Aorta (tissue), 5 donors: ENCODE measurements at regions of chr3 and their contacts with region 1.

Region 1: DNA sequence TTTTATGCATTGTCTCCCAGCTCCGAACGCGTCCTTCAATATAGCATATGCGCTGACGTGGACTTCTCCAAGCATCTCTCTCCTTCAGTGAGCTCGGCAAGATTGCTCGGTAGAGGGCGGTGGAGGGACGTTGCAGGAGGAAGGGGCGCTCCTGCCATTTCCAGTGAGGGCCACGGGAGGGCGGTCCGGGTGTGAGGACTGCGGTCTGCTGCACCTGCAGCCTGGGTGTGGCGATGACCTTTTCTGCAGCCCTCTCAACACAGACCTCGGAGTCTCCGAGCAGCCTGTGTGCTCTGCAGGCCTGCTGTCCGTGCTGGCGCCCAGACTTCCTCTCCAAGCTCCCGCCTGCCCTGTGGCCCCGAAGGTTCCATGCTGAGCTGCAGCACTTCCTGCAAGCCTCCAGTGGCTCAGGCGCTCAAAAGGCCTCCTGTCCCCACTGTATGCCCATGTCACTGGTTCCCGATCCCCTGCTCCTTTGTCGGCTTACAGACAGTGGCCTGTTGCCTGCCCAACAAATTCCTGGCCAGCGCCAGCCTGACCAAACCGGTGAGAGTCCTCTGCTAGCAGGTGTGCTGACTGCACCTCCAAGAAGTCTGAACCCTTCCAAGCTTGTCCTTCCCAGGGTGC is 8.9 kb upstream of the RTP3 start:
- DNase-seq: peak; percentile 93 to 95
- ATAC-seq: peak; percentile 94
- H3K4me3 ChIP-seq: no peak overlapping the region
- H3K27ac ChIP-seq: no peak overlapping the region
- H3K4me1 ChIP-seq: no peaks in the 10 kb centered on the region
- H3K27me3 ChIP-seq: no peaks in the 10 kb centered on the region

Region 2: GRCh38 chr3:46462111-46462510 is 26.7 kb before region 1 on chr3:
- intact Hi-C with region 1: no loop called
- DNase-seq: no peak
- ATAC-seq: no peak
- H3K4me3 ChIP-seq: no peak overlapping the region
- H3K27ac ChIP-seq: no peak overlapping the region
- H3K4me1 ChIP-seq: no peaks in the 10 kb centered on the region
- H3K27me3 ChIP-seq: peaks cover 0 to 2% of the 10 kb centered on the region in 2 donors

Region 3: DNA sequence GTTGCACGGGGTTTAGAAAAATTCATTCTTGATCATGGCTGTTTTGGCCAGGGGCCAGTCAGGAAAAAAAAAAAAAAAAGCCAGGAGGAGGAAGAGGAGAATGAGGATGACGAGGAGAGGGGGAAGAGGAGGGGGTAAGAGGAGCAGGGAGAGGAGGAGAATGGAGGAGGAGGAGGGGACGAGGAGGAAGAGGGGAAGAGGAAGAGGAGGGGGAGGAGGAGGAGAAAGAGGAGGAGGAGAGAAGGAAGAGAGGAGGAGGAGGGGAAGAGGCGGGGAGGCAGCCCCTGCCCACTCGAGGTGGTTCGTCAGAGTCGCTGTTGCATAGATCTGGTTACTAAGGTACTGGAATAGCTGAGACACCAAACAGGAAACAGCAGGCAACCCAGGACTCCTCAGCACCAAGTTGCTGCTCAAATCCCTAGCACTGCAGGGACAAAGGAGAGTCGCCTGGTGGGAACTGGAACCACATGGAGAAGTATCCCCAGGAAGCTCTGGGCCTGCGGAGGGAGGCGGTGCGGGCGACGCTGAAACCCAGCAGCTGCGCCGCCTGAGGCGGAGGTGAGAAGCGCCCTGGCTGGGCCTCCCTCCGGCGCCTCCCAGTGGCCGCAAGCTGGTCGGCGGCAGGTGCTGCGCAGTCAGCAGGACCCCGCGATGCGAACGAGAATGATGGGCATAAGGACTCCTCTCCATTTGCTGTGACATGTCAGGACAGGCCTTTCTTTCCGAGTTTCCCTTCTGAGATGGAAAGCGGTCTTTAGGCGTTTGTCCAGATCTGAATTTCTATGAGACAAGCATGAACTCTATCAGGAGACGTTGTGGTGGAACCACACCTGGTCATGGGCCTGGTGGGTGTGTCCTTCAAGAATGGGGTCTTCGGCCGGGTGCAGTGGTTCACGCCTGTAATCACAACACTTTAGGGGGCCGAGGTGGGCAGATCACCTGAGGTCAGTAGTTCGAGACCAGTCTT is 141.0 kb after region 1 on chr3:
- intact Hi-C with region 1: loop called (anchors 2 to 10 kb)
- DNase-seq: peak; percentile 86 to 93
- ATAC-seq: peak; percentile 93
- H3K4me3 ChIP-seq: no peak overlapping the region
- H3K27ac ChIP-seq: no peak overlapping the region
- H3K4me1 ChIP-seq: no peaks in the 10 kb centered on the region
- H3K27me3 ChIP-seq: no peaks in the 10 kb centered on the region